HAP-1 (cell line): ENCODE measurements at regions of chr1 and their contacts with region 1.

Region 1: DNA sequence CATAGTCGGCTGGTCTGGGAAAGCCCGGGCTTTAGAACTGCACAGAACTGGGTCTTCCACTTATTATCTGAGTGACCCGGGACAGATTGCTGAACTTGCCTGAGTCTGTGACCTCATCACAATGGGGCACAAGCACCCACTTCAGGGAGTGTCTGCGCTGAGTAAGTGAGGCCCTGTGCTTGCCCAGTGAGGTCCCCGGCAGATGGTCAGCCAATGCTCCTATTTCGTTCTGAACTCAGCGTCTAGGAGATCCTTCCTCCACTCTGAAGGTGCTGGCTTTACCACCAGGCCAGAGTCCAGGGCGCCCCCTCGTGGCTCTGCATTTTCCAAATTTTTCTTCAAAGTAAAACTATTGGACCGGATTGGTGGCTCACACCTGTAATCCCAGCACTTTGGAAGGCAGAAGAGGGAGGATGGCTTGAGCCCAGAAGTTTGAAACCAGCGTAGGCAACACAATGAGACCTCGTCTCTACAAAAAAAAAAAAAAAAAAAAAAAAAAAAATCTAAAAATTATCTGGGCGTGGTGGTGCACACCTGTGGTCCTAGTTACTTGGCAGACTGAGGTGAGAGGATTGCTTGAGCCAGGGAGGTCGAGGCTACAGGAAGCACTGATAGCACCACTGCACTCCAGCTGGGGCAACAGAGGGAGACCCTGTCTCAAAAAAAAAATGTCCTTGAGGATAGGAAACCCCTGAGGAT is 61.7 kb downstream of the FCRL5 start:
- DNase-seq: peak; percentile 68 to 86
- H3K4me3 ChIP-seq: no peak overlapping the region
- H3K4me1 ChIP-seq: no peaks in the 10 kb centered on the region
- H3K27me3 ChIP-seq: peaks cover 14% of the 10 kb centered on the region

Region 2: DNA sequence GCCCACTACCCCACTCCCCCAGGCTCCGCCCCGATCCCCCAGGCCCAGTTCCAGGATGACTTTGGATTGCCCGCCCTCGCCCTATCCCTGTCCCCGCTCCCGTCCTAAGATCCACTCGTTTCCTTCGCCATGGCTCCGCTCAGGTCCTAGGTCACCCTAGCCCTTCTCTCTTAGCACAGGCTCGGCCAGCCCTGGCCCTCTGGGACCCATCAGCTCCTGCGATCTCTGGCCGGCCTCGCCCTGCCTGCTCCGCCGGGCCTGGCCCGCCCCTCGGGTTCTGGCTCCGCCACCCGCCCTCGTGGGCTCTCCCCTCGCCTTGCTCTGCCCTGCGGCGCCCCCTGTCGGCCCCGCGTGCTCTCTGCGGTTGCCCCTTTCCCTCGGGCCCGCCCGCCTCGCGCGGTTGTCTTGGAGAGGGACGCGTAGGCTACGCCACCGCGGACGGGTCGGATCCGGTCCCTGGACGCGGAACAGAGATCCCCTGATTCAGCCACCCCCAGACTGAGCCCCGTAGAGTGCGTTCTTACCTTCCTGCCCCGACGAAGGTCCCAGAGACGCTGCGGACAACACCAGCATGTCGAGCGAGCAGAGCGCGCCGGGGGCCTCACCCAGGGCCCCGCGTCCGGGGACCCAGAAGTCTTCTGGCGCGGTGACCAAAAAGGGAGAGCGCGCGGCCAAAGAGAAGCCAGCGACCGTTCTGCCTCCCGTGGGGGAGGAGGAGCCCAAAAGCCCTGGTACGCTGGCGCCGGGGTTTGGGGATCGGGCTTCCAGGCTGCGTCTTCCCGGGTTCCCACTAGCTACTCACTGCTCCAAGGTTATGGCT is 570.2 kb before region 1 on chr1 and contains the start of gene LRRC71:
- in situ Hi-C with region 1: no loop called
- DNase-seq: peak; percentile 74 to 92
- H3K4me3 ChIP-seq: no peak within 1 kb of the TSS
- H3K4me1 ChIP-seq: no peaks in the 10 kb centered on the region
- H3K27me3 ChIP-seq: peaks cover 35% of the 10 kb centered on the region

Region 3: DNA sequence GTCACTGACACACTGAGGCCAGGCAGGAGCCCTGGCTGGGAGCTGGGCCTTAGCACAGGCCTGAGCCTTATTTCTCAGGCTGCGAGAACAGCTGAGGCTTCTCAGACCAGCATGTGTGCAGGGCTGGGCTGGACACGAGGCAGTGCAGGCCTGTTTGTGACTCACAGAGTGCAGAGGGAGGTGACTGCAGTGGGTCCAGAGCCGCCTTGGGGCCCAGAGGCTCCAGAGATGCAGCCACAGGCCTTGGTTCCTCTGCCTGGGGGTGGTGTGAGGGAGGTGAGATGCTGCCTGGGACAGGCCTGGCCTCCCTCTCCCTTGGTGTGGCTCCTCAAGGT is 291.2 kb before region 1 on chr1:
- in situ Hi-C with region 1: loop called (anchors 5 kb)
- DNase-seq: no peak
- H3K4me3 ChIP-seq: no peak overlapping the region
- H3K4me1 ChIP-seq: no peaks in the 10 kb centered on the region
- H3K27me3 ChIP-seq: peaks cover 7% of the 10 kb centered on the region

Region 4: GRCh38 chr1:157369808-157370521 is 120.7 kb before region 1 on chr1:
- in situ Hi-C with region 1: loop called (anchors 5 kb)
- DNase-seq: peak; percentile 38 to 74
- H3K4me3 ChIP-seq: no peak overlapping the region
- H3K4me1 ChIP-seq: peaks cover 7% of the 10 kb centered on the region; the same call in 1 of the 2 replicates
- H3K27me3 ChIP-seq: 0 out of 2 replicates have a peak, but pooled peaks cover 5% of the 10 kb centered on the region

Region 5: DNA sequence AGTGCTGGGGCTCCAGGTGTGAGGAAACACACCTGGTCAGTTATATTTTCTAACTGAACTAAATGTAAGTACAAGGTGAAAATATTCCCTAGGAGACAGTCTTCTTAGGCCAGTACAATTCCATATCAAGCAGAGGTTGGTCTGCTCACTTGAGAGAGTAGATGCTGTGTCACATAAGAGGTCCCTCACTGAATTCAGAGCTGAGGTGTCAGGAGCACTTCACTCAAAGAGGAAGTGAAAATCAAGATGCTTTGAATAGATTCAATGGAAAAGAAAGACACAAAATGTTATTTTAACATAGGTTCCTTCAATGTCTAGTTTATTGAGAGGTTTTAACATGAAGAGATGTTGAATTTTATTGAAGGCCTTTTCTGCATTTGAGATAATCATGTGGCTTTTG is 214.3 kb after region 1 on chr1:
- in situ Hi-C with region 1: no loop called
- DNase-seq: no peak
- H3K4me3 ChIP-seq: no peak overlapping the region
- H3K4me1 ChIP-seq: no peaks in the 10 kb centered on the region
- H3K27me3 ChIP-seq: peaks cover 2% of the 10 kb centered on the region; the same call in 1 of the 2 replicates